CD8-positive, alpha-beta memory T cell (primary cell): ENCODE measurements at regions of chr14 and their contacts with region 1.

Region 1: DNA sequence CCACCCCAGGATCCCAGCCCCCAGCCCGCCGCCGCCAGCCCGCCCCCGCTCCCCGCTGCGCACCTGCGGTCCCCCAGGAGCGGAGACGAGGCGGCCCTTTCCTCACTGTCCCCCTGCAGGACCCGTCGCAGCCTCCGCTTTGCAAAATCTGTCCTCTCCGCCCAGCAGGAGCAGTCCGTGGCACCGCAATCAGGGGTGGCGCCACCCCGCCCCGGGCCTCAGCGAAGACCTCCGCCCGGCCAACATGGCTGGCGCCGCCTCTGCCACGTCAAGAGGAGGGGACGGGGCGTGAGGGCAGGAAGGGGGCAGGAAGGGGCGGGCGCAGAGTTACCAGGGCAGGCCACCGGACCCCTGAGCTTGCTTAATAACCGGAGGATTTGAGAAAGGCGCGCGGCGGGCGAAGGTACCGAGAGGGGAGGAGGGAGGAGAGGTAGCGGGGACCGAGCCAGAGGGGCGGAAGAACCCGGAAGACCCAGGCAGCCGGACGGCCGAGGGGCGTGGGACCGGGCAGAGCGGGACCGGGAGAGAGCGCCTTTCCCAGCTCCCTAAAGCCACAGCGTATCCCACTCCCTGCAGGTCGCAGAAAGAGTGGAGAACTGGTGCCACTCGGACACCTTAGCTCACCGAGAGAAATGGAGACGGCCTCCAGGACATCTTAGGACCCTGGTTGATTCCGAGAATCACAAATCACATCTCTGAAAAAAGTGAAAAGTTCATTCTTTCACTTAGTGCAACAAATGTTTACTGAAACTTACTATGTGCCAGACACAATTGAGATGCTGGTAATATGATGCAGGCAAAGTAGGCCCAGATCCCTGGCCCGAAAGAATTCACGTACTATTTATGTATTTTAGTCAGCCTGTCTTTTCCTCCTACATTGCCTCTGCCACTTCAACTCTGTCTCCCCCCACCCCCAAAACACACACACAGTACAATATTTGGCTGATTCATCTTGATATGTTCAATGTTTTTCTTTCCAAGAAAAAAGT is at the start of gene SEC23A:
- DNase-seq: peak; percentile 77 to 91 (median 83)
- H3K4me3 ChIP-seq: peak within 1 kb of the TSS; percentile 96
- H3K4me3 Mint-ChIP-seq: peak within 1 kb of the TSS; percentile 91 to 98 (median 95)
- H3K27ac ChIP-seq: peak within 1 kb of the TSS; percentile 95
- H3K27ac Mint-ChIP-seq: peak within 1 kb of the TSS; percentile 92 to 100 (median 97)
- H3K4me1 ChIP-seq: peaks cover 31% of the 10 kb centered on the region
- H3K4me1 Mint-ChIP-seq: peaks cover 30 to 59% (median 55%) of the 10 kb centered on the region in 3 donors
- H3K27me3 ChIP-seq: no peaks in the 10 kb centered on the region
- H3K27me3 Mint-ChIP-seq: no peaks in the 10 kb centered on the region
- total RNA-seq, gene SEC23A: 37.4 to 37.9 TPM

Region 2: DNA sequence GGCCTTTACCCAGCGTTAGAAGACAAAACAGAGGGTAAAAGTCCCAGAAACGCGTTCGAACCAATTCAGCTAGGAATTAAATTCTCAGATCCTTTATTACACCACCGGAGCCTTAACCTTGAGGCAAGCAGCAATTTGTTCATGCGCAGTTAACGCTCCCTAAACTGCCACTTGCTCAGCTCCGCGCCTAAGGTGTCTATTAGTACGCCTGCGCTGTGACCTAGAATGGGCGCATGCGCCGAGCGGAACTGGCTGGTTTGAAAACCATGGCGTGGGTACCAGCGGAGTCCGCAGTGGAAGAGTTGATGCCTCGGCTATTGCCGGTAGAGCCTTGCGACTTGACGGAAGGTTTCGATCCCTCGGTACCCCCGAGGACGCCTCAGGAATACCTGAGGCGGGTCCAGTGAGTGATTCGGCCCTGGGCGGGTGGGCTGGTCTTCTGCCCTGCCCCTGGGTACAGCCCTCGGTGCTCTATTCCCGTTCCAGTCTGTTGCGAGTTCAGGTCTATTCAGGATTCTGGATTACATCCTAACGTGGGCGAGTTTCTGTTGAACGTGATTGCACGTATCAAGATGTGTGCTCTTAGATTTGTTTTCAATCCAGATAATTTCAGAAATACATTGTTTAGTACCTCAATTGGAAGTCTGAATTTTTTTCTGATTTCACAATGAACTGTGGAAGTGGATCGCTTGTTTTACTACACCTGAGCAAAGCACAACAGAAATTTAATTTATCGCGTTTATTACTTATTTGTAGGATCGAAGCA is 11.0 kb after region 1 on chr14 and contains the start of gene GEMIN2:
- CTCF ChIA-PET with region 1: interaction called, 5 read pairs
- POLR2A ChIA-PET with region 1: interaction called, 32 read pairs
- DNase-seq: peak; percentile 88 to 97 (median 91)
- H3K4me3 ChIP-seq: peak within 1 kb of the TSS; percentile 85
- H3K4me3 Mint-ChIP-seq: peak within 1 kb of the TSS; percentile 95 to 99 (median 97)
- H3K27ac ChIP-seq: peak within 1 kb of the TSS; percentile 73
- H3K27ac Mint-ChIP-seq: peak within 1 kb of the TSS; percentile 91 to 98 (median 96)
- H3K4me1 ChIP-seq: peaks cover 14% of the 10 kb centered on the region
- H3K4me1 Mint-ChIP-seq: peaks cover 18 to 34% (median 32%) of the 10 kb centered on the region in 3 donors
- H3K27me3 ChIP-seq: no peaks in the 10 kb centered on the region
- H3K27me3 Mint-ChIP-seq: peaks cover 0 to 2% of the 10 kb centered on the region in 2 donors
- total RNA-seq, gene GEMIN2: 17.0 to 18.1 TPM

Region 3: DNA sequence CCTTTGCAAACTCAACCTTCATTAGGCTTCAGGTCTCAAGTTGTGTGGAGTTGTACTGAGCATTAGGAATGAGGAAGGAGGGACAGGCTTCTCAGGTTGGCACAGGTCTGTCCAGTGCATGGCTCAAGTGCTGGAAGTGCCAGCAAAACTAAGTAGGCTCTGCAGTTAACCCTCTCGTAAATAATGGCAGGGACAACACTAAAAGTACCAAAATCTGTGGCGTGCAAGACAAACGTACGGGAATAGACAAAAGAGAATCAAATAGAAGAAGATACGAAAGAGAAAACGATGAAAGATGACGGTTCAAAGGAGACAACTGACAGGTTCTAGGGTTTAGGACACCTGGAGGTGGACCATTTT is 66.3 kb after region 1 on chr14:
- CTCF ChIA-PET with region 1: interaction called, 3 read pairs
- POLR2A ChIA-PET with region 1: interaction called, 13 read pairs
- DNase-seq: no peak
- H3K4me3 ChIP-seq: peak overlapping the region; percentile 88
- H3K4me3 Mint-ChIP-seq: peak overlapping the region; percentile 89 to 100 (median 99)
- H3K27ac ChIP-seq: peak overlapping the region; percentile 98
- H3K27ac Mint-ChIP-seq: peak overlapping the region; percentile 89 to 100 (median 98)
- H3K4me1 ChIP-seq: peaks cover 41% of the 10 kb centered on the region
- H3K4me1 Mint-ChIP-seq: peaks cover 47 to 66% (median 63%) of the 10 kb centered on the region in 3 donors
- H3K27me3 ChIP-seq: no peaks in the 10 kb centered on the region
- H3K27me3 Mint-ChIP-seq: no peaks in the 10 kb centered on the region

Region 4: GRCh38 chr14:39360316-39360715 is 257.1 kb after region 1 on chr14:
- CTCF ChIA-PET with region 1: no interaction called
- POLR2A ChIA-PET with region 1: no interaction called
- DNase-seq: no peak
- H3K4me3 ChIP-seq: no peak overlapping the region
- H3K4me3 Mint-ChIP-seq: no peak overlapping the region
- H3K27ac ChIP-seq: no peak overlapping the region
- H3K27ac Mint-ChIP-seq: peak overlapping the region in 3 of 8 donors; percentile 43 to 77 (median 65)
- H3K4me1 ChIP-seq: no peaks in the 10 kb centered on the region
- H3K4me1 Mint-ChIP-seq: peaks cover 42 to 53% (median 49%) of the 10 kb centered on the region in 3 donors
- H3K27me3 ChIP-seq: no peaks in the 10 kb centered on the region
- H3K27me3 Mint-ChIP-seq: no peaks in the 10 kb centered on the region